Mammary epithelial cell (primary cell): ENCODE measurements at regions of chr16 and their contacts with region 1.

Region 1: DNA sequence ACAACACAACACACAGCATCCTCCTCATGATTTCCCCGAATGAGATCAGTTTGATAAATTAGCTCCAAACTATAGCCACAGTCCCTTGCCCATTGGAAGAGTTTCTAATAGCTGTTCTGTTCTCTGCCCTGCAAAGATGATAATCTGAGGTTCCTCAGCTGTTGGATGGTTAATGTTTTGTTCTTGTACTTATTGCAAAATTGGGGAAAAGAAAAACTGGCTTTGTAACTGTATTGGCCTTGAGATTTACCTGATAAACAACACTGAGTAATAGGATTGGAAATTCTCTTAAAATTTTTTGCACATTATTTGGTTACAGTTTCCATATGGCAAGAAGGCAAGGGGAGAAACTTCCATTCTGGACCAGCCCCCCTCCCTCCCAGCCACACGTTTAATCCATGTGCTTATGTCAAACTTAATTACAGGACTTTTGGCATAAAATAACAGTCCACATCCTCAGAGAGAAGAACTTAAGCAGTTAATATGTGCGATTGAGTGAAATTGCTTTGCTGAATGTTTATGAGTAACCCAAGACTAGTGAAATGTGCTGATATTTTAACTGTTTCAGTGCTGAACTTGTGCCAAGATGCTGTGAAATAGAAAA is 119.1 kb upstream of the ZFHX3 start:
- DNase-seq: peak; percentile 14
- H3K4me3 ChIP-seq: peak overlapping the region in 1 of 3 experiments; percentile 8
- H3K27ac ChIP-seq: no peak overlapping the region
- H3K4me1 ChIP-seq: no peaks in the 10 kb centered on the region
- H3K27me3 ChIP-seq: no peaks in the 10 kb centered on the region
- CTCF ChIP-seq: no peak

Region 2: DNA sequence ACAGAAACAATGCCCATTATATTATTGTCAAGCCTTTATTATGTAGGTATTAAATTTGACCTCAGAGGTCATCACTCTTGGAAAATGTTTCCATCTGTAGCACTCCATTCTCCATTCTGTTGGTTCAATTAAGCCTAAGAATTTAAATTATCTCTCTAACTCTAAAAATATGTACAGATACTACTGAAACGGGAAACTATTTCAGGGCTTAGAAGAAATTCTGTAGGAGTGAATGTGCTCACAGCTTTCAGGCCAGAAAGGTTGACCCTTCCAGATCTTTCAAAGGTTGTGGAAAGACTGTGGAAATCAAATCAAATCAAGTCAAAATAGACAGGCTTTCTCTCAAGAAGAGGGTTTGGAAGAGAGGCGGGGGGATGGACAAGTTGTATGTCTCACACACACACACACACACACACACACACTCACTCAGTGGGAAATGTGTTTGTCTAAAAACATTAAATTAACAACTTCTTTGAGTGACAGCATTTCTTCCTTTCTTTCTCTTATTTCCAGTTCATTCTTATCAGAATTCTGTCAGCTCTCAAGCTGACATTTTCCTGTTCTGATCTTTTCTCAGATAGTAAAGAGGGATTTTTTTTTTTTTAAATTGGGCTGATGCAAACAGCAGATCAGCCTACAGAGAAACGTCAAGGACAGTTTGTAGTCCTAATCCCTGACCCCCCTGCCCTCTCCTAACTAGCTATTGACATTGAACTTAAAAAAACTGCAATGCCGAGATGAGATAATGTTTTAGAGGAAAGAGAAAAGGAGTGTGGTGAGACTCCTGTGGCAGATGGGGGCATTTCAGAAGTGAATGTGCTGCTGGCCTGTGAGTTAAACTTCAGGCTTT is 19.9 kb after region 1 on chr16:
- CTCF ChIA-PET with region 1: interaction called, 11 read pairs
- dilution Hi-C with region 1: no loop called
- in situ Hi-C with region 1: no loop called
- intact Hi-C with region 1: no loop called
- DNase-seq: no peak
- H3K4me3 ChIP-seq: no peak overlapping the region
- H3K27ac ChIP-seq: no peak overlapping the region
- H3K4me1 ChIP-seq: no peaks in the 10 kb centered on the region
- H3K27me3 ChIP-seq: peaks cover 7% of the 10 kb centered on the region
- CTCF ChIP-seq: no peak